ENCODE measurements at regions of chr1 and their contacts with region 1.

Region 1: DNA sequence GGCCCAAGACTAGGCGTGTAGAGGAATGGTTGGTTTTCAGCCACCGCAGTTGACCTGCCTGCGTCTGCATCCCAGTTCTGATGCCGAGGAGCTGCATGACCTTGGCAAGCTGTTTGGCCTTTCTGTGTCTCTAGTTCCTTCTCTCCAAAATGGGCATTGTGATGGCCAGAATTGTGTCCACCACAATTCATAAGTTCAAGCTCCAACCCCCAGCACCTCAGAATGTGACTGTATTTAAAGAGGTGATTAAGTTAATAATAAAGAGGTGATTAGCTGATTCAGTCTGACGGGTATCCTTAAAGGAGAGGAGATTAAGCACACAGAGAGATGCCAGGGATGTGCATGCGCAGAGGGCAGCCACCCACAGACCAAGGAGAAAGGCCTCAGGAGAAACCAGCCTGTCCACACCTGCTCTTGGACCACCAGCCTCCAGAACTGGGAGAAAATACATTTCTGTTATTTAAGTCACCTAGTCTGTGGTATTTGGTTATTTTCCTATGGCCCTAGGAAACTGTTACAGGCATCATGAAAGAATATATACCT is 28.5 kb downstream of the MAB21L3 start:
- DNase-seq: no peak
- H3K4me3 Mint-ChIP-seq: no peak overlapping the region
- H3K27ac Mint-ChIP-seq: no peak overlapping the region
- H3K4me1 Mint-ChIP-seq: peaks cover 12% of the 10 kb centered on the region
- H3K27me3 Mint-ChIP-seq: peaks cover 6% of the 10 kb centered on the region

Region 2: GRCh38 chr1:115890580-115890979 is 249.1 kb before region 1 on chr1:
- intact Hi-C with region 1: no loop called
- DNase-seq: no peak
- H3K4me3 Mint-ChIP-seq: no peak overlapping the region
- H3K27ac Mint-ChIP-seq: no peak overlapping the region
- H3K4me1 Mint-ChIP-seq: no peaks in the 10 kb centered on the region
- H3K27me3 Mint-ChIP-seq: no peaks in the 10 kb centered on the region

Region 3: DNA sequence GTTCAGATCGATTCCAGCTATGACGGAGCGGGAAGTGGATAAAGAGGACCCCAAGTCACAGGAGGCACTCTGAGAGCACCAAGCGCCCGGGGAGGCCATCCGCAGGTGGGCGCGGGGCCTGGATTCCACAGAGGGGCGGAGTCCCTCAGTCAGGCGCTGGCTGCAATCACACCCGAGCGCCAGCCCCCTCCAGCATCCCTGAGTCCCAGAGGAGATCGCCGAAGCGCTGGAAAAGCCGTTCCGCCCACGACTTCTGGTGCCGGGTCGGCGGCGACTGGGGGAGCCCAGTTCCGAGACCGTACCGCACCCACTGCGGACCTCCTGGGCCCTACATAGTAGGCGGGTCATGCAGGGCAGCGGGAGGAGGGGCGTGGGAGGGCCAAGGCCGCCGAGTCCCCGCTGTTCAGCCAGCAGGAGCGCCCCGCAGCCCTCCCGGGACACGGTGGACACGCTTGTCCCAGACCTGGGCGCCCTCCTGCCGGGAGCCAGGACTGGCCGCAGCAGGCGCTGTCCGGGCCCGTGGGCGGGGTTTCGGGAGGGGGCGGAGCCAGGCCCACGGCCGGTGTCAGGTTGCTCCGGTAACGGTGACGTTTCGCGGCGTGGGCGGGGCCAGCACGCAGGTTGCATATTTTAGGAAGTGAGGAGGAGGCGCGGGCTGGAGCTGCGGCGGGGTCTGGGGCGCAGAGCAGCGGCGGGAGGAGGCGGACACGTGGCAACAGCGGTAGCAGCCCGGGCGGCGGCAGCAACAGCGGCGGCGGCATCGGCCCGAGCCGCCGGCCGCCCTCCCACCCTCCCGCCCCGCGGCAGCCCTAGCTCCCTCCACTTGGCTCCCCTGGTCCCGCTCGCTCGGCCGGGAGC is 233.2 kb after region 1 on chr1 and contains the start of gene ATP1A1:
- intact Hi-C with region 1: loop called (anchors 2 kb)
- DNase-seq: peak; percentile 95
- H3K4me3 Mint-ChIP-seq: peak within 1 kb of the TSS; percentile 95
- H3K27ac Mint-ChIP-seq: peak within 1 kb of the TSS; percentile 90
- H3K4me1 Mint-ChIP-seq: peaks cover 38% of the 10 kb centered on the region
- H3K27me3 Mint-ChIP-seq: peaks cover 12% of the 10 kb centered on the region
- total RNA-seq, gene ATP1A1: 238 and 240 TPM in 2 replicates

Region 4: DNA sequence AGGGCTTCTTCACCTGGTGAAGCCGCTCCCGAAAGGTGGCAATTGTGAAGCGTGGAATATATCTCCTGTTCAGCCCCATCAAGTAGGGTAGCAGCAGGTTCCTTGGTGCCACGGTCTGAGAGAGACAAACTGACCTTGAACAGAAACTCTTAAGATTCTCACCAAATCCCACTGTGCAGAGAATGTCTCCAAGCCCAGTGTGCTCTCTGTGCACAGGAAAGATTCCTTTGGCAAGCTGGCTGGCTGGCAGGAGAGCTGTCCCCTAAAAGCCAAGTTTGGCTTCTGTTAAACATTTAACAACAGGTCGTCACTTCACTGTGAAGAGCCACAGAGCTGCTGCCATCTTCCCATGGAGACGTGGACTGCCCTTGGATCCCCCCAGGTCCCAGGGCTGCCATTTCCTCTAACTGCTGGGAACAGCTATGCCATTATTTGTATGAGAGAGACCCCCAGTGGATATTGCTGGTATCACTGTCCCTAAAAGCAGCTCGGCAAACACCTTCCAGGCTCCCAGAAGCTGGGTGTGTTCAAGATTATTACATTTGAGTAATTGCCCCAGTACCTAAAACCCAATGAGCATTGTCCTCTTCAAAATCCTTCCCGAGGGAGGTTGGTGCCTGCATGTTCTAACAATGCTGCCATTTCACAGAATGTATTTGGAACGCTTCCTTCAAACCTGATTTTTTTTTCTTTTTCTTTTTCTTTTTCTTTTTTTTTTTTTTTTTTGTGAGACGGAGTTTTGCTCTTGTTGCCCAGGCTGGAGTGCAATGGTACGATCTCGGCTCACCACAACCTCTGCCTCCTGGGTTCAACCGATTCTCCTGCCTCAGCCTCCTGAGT is 359.3 kb after region 1 on chr1:
- intact Hi-C with region 1: loop called (anchors 1 kb)
- DNase-seq: peak; percentile 37
- H3K4me3 Mint-ChIP-seq: no peak overlapping the region
- H3K27ac Mint-ChIP-seq: peak overlapping the region; percentile 50
- H3K4me1 Mint-ChIP-seq: peaks cover 75% of the 10 kb centered on the region
- H3K27me3 Mint-ChIP-seq: no peaks in the 10 kb centered on the region